HEK293T (cell line): ENCODE measurements at regions of chr3 and their contacts with region 1.

Region 1: DNA sequence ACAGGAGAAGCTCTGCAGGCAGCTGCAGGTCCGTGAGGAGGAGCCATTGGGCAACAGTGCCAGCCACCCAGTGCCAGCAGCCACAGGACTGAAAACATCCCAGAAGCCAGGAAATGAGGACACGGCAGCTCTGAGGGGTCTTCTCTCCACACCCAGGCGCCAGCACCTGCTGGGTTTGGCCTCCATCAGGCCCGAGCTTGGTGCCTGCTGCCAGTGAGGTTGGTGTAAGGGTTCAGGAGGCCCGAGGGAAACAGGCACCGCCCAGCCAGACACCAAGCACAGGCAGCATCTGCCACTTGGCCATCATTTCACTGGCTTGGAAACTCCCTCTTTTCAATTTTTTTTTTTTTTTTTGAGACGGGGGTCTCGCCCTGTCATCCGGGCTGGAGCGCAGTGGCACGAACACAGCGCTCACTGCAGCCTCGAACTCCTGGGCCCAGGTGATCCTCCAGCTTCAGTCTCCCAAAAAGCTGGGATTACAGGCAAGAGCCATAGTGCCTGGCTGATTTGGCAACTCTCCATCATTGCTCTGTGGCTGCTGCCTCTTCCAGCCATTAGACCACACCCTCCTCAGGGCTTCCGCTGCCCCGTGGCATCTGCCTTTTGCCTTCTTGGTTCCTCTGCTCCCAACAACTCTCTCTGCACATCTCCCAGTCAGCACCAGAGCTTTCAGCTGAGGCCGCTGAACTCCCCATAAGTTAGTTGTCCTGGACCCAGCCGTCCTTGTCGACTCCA is 1.5 kb upstream of the ITIH3 start:
- DNase-seq: no peak

Region 2: GRCh38 chr3:52536369-52537164 is 256.6 kb before region 1 on chr3 and contains the start of gene UQCC5:
- CTCF ChIA-PET with region 1: no interaction called
- POLR2A ChIA-PET with region 1: no interaction called
- DNase-seq: peak; percentile 98

Region 3: DNA sequence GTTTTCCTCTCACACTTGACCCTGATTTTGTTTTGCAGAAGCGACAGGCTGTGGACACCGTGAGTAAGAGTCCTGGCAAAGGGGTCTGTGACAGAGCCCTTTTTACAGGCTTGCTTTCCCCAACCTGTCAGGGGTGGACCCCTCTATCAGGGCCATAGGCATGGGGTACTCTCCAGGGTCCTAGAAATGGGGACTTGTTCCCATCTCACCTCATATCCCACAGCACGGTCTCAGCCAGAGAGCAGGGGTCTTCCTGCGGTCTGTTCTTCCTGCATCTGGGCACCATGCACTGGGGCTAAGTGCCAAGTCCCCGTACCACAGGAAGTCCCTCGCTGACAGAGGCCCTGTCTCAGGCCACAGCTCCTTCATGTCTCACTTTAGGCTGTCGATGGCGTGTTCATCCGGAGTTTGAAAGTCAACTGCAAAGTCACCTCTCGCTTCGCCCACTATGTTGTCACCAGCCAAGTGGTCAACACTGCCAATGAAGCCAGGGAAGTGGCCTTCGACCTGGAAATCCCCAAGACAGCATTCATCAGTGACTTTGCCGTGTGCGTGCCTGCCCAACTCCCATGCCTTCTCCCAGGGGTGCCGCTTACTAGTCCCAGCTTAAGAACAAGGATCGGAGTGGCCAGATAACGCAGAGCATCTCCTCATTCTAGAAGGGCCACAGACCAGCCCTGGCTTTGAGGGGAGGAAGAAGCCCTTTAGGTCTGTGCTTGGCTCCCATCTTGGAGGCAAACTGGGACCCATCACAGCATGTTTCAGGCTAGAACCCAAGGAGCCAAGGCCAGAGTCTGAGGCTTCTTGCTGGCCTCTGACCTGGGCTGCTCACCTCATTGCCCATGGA is 14.9 kb before region 1 on chr3:
- CTCF ChIA-PET with region 1: no interaction called
- POLR2A ChIA-PET with region 1: no interaction called
- DNase-seq: no peak

Region 4: DNA sequence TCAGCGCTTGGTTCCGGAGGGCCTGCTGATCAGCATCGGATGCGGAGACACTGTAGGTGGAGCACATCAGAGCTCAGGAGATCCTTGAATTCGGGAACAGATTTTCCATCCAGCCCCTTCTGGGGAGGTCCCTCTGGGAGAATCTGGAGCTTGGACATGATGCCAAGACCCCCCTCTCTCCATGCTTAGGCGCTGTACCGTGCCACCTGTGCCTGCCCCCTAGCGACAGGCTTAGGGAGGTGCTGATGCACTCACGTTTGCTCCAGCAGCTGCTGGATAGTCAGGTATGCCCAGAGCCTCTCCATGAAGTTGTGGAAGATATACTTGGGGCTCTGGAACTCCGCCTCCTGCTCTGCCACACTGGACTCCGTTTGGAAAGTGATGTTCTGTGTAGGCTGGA is 27.6 kb after region 1 on chr3:
- CTCF ChIA-PET with region 1: interaction called, 10 read pairs
- POLR2A ChIA-PET with region 1: no interaction called
- DNase-seq: peak; percentile 78